ENCODE measurements at regions of chr1 and their contacts with region 1.

Region 1: DNA sequence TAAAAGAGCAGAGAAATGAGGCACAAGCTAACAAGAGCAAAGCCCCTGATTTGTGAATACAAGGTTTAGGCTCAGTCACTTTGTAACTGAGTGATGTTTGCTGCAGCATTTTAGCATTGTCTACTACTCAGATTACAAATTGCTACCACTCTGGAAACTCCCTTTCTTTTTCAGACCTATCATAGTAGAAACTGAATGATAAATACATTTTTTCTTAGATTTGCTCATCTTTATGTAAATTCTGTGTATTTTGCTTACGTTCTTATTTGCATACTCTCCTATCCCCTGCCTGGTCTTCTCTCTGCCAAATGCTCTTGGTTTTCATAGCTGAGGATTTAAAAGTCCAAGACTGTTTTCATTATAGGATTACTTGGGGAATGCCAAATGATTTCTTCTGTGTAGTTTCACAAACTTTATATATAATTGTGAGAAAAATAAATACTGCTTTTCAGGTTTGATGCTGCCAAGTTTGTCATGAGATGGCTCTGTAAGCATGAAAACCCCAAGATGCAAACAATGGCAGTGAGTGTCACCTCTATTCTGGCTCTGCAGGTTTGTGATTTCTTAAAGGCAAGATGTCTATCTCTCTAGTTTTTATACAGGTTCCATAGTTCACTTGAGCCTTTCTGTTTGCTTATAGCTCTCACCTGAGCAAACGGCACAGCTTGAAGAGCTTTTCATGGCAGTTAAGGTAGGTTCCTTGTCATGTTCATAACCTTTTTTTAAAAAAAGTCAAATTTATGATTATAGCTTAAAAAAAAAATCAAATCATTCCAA is 24.7 kb downstream of the ZYG11A start:
- DNase-seq: peak in 1 of 2 experiments; percentile 64
- H3K4me3 ChIP-seq: no peak overlapping the region
- H3K27ac ChIP-seq: no peak overlapping the region
- H3K4me1 ChIP-seq: no peaks in the 10 kb centered on the region
- H3K27me3 ChIP-seq: no peaks in the 10 kb centered on the region
- CTCF ChIP-seq: no peak

Region 2: DNA sequence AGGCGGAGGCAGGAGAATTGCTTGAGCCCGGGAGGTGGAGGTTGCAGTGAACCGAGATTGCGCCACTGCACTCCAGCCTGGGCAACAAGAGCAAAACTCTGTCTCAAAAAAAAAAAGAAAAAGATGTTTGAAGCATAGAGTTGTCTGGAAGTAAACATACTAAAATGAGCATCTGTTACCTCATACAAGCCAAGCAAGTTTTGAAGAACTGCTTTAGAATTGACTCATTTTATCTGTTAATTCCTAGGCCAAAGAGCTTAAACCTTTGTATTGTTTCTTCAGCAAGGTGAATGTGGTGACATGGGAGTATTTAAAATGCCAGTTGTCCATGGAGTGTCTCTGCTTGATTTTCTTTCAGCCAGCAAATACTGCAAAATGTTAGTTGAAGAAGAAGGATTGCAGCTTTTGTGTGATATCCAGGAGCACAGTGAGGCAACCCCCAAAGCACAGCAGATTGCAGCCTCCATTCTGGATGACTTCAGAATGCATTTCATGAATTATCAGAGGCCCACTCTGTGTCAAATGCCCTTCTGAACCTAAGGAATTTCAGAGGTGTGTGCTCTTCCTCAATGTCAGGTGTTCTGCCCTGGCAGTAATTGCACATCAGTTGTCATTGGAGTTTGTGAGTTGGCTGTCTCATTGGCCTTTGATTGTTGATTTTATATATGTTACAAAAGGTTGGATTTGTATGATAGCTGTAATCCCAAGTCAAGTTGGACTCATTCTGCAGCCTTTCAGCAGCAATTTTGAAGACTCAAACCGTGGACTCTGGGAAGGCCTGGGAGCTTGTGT is 25.3 kb after region 1 on chr1:
- CTCF ChIA-PET with region 1: no interaction called
- POLR2A ChIA-PET with region 1: no interaction called
- intact Hi-C with region 1: no loop called
- DNase-seq: no peak
- H3K4me3 ChIP-seq: no peak overlapping the region
- H3K27ac ChIP-seq: no peak overlapping the region
- H3K4me1 ChIP-seq: no peaks in the 10 kb centered on the region
- H3K27me3 ChIP-seq: no peaks in the 10 kb centered on the region
- CTCF ChIP-seq: no peak

Region 3: DNA sequence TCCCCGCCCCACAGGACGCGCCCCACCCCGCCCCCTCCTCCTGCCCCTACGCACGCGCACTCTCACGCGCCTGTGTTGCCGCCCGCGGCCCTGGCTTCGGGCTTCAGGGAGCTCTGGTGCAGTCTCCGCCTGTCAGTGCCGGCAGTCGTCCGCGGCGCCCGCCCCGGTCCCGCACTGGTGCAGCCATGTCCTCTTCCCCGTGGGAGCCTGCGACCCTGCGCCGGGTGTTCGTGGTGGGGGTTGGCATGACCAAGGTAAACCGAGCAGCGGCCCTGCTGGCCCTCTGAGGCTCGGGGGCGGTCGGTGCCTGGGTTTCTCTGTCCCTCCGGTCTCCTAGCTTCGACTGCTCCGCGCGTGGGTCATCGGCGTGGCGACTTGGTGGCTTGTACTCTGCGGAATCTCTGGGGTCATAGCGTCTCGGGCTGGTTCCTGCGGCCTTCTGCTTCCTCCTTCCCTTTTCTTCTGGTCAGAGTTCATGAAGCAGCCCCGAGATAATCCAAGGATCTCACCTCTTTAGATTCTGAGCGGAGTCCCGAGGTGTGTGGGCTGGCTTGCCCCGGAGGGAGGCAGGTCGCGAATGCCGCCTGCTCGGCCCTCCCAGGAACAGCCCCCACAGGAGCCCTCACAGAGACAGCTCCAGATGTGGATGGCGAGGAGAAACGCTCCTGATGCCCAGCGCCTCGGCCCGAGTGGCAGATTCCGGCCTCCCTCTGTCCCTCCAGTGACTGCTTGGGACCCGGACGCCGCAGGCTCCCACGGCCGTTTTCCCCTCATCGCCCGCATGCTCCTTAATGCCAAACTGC is 60.1 kb after region 1 on chr1 and contains the start of gene SCP2:
- CTCF ChIA-PET with region 1: no interaction called
- POLR2A ChIA-PET with region 1: no interaction called
- intact Hi-C with region 1: no loop called
- DNase-seq: peak; percentile 45 to 71
- H3K4me3 ChIP-seq: peak within 1 kb of the TSS; percentile 97
- H3K27ac ChIP-seq: no peak within 1 kb of the TSS
- H3K4me1 ChIP-seq: 0 out of 2 replicates have a peak, but pooled peaks cover 9% of the 10 kb centered on the region
- H3K27me3 ChIP-seq: no peaks in the 10 kb centered on the region
- CTCF ChIP-seq: no peak
- total RNA-seq, gene SCP2: 87.8 and 95.8 TPM in 2 replicates

Region 4: DNA sequence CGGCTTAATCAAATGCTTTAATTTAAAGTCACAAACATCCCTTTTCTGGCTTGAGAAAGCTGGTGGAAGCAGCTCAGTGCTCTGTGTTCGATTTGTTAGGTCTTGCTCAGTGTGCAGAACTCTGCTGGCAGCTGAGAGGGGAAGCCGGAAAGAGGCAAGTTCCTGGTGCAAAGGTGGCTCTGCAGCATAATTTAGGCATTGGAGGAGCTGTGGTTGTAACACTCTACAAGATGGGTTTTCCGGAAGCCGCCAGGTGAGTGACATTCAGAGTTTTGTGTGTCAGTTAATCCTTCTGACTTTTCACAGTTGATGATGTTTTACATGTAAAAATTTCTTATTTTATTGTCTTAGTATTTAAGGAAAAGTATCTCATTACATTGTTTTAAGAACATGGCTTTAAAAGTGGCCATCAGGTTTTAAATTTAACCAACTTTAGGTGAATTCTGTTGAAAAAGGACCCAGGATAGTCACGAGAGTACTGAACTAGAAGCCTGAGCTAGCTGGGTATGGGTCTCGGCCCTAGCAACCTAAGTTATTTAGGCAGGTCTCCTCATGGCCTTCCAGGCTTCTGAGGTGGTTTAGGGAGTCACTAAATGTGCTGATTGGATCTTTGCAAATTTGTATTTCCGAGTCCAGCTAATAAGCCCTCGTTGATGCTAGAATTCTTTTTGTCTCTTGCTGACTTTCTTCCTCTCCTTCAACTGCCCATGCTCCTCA is 147.7 kb after region 1 on chr1:
- CTCF ChIA-PET with region 1: no interaction called
- POLR2A ChIA-PET with region 1: interaction called, 27 read pairs
- intact Hi-C with region 1: no loop called
- DNase-seq: peak; percentile 76 to 85
- H3K4me3 ChIP-seq: peak overlapping the region; percentile 78
- H3K27ac ChIP-seq: peak overlapping the region; percentile 31
- H3K4me1 ChIP-seq: peaks cover 26% of the 10 kb centered on the region
- H3K27me3 ChIP-seq: no peaks in the 10 kb centered on the region
- CTCF ChIP-seq: no peak